HepG2 (cell line): ENCODE measurements at regions of chr2 and their contacts with region 1.

Region 1: GRCh38 chr2:57906152-57906732 is 140.4 kb upstream of the VRK2 start:
- DNase-seq: peak; percentile 62
- ATAC-seq: peak; percentile 100
- H3K4me3 ChIP-seq: no peak overlapping the region
- H3K27ac ChIP-seq: no peak overlapping the region
- H3K4me1 ChIP-seq: no peaks in the 10 kb centered on the region
- H3K27me3 ChIP-seq: no peaks in the 10 kb centered on the region
- CTCF ChIP-seq: peak; percentile 86
- EP300 ChIP-seq: no peak
- POLR2A ChIP-seq: no peak
- RAD21 ChIP-seq: peak; percentile 87

Region 2: GRCh38 chr2:57759822-57760300 is 146.4 kb before region 1 on chr2:
- CTCF ChIA-PET with region 1: no interaction called
- POLR2A ChIA-PET with region 1: no interaction called
- in situ Hi-C with region 1: no loop called
- intact Hi-C with region 1: loop called (anchors 1 kb)
- DNase-seq: peak; percentile 63
- ATAC-seq: peak; percentile 100
- H3K4me3 ChIP-seq: peak overlapping the region in 1 of 3 experiments; percentile 54; a peak in 2 of 6 replicates
- H3K27ac ChIP-seq: no peak overlapping the region
- H3K4me1 ChIP-seq: peaks cover 15% of the 10 kb centered on the region
- H3K27me3 ChIP-seq: peaks cover 0 to 6% of the 10 kb centered on the region in 2 experiments; a peak in 1 of 5 replicates
- CTCF ChIP-seq: peak; percentile 98
- EP300 ChIP-seq: no peak
- POLR2A ChIP-seq: no peak
- RAD21 ChIP-seq: peak; percentile 97

Region 3: GRCh38 chr2:58131191-58132011 is 225.2 kb after region 1 on chr2:
- CTCF ChIA-PET with region 1: no interaction called
- POLR2A ChIA-PET with region 1: no interaction called
- in situ Hi-C with region 1: no loop called
- intact Hi-C with region 1: loop called (anchors 5 kb)
- DNase-seq: peak; percentile 15
- ATAC-seq: peak; percentile 64
- H3K4me3 ChIP-seq: no peak overlapping the region
- H3K27ac ChIP-seq: no peak overlapping the region
- H3K4me1 ChIP-seq: no peaks in the 10 kb centered on the region
- H3K27me3 ChIP-seq: no peaks in the 10 kb centered on the region
- CTCF ChIP-seq: peak; percentile 59
- EP300 ChIP-seq: no peak
- POLR2A ChIP-seq: no peak
- RAD21 ChIP-seq: peak; percentile 48; the same call in 1 of the 2 replicates

Region 4: DNA sequence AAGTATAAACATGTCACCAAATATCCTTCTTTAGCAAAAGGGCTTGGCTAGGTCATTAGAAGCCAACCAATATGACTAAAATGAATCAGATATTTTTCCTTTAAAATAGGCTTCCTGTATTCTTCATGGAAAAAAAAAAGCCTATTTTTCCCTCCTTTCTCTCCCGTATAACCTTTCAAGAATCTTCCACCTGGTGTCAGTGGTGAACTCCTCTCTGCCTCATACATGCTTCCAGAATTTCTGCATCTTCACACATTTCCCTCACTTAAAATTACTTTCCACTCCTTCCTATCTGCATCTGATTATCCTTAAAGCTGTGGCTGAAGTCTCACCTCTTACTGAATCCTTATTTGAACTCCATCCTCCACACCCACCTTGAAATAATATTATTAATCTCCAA is 451.8 kb after region 1 on chr2:
- CTCF ChIA-PET with region 1: interaction called, 4 read pairs
- POLR2A ChIA-PET with region 1: no interaction called
- in situ Hi-C with region 1: no loop called
- intact Hi-C with region 1: loop called (anchors 1 kb)
- DNase-seq: no peak
- ATAC-seq: no peak
- H3K4me3 ChIP-seq: no peak overlapping the region
- H3K27ac ChIP-seq: no peak overlapping the region
- H3K4me1 ChIP-seq: no peaks in the 10 kb centered on the region
- H3K27me3 ChIP-seq: no peaks in the 10 kb centered on the region; a peak in 1 of 5 replicates
- CTCF ChIP-seq: no peak
- EP300 ChIP-seq: no peak
- POLR2A ChIP-seq: no peak
- RAD21 ChIP-seq: no peak

Region 5: DNA sequence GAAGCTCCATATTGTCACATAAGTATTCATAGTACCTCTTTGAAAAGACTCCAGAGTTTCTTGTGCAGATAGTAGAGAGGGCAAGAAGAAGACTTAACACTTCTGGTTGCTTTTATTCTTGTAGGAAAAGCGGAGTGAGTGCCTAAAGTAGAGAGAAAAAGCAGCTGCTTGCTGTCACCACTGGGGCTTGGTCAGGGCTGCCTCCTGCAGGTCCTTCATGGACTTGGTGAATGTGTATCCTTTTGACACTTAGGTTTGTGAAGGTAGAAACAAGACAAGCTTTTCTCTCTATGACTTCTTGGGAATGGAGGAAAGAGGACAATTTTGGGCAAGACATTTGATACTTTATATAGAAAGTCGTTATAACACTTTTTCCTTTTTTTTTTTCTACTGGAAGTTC is 647.7 kb after region 1 on chr2:
- CTCF ChIA-PET with region 1: no interaction called
- POLR2A ChIA-PET with region 1: no interaction called
- in situ Hi-C with region 1: no loop called
- intact Hi-C with region 1: loop called (anchors 10 kb)
- DNase-seq: peak; percentile 10
- ATAC-seq: peak; percentile 76
- H3K4me3 ChIP-seq: no peak overlapping the region
- H3K27ac ChIP-seq: no peak overlapping the region
- H3K4me1 ChIP-seq: no peaks in the 10 kb centered on the region
- H3K27me3 ChIP-seq: no peaks in the 10 kb centered on the region
- CTCF ChIP-seq: peak; percentile 26; the same call in 1 of the 2 replicates
- EP300 ChIP-seq: no peak
- POLR2A ChIP-seq: no peak
- RAD21 ChIP-seq: no peak